ENCODE measurements at regions of chr9 and their contacts with region 1.

Region 1: GRCh38 chr9:112997236-112997941 is 14.6 kb downstream of the ZNF883 start:
- DNase-seq: no peak
- ATAC-seq: no peak
- H3K4me3 ChIP-seq: no peak overlapping the region
- H3K27ac ChIP-seq: no peak overlapping the region
- H3K4me1 ChIP-seq: no peaks in the 10 kb centered on the region
- H3K27me3 ChIP-seq: no peaks in the 10 kb centered on the region
- CTCF ChIP-seq: no peak

Region 2: GRCh38 chr9:112831281-112831851 is 166.0 kb before region 1 on chr9:
- intact Hi-C with region 1: no loop called
- DNase-seq: peak; percentile 36 to 38
- ATAC-seq: peak; percentile 74 to 90 (median 83)
- H3K4me3 ChIP-seq: no peak overlapping the region
- H3K27ac ChIP-seq: peak overlapping the region in 8 of 10 donors; percentile 6 to 54 (median 24)
- H3K4me1 ChIP-seq: peaks cover 0 to 18% (median 9%) of the 10 kb centered on the region in 9 donors
- H3K27me3 ChIP-seq: no peaks in the 10 kb centered on the region
- CTCF ChIP-seq: no peak

Region 3: DNA sequence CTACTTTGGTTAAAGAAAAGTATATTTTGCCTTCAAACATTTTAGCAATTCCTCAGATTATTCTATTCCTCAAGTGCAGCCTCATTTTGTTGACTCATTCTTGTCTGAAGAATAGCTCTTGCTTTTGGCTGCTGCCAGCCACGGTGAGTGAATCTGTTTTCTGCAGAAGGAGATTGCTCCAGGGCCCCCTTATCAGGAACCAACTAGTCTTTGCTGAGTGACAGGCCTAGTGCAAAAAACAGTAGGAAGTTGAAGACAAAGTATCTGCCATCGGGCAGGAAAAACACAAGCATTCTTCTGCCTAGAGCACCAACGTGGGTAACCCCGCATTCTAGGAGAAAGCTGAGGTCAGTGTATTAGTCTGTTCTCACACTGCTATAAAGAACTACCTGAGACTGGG is 27.7 kb before region 1 on chr9:
- intact Hi-C with region 1: loop called in 1 of 10 experiments (anchors 5 kb)
- DNase-seq: no peak
- ATAC-seq: no peak
- H3K4me3 ChIP-seq: no peak overlapping the region
- H3K27ac ChIP-seq: no peak overlapping the region
- H3K4me1 ChIP-seq: no peaks in the 10 kb centered on the region
- H3K27me3 ChIP-seq: peaks cover 0 to 8% (median 0%) of the 10 kb centered on the region in 7 donors
- CTCF ChIP-seq: no peak

Region 4: DNA sequence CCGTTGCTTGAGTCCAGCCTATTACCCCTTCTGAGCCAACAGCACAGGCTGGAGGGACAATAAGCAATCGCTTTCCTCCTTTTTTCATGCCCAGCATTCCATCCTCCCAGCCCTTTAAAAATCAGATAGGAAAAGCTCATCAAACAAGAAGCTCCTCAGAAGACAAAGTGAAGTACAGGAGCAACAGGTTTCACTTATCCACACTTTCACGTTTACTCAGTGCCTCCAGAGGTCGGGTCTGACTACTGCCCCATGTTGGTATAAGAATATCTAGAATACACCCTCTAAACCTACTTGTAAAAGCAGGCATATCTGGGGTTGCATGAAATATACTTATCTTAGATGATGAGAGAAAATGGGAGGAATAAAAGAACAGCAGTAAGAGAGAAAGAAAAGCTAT is 199.6 kb after region 1 on chr9:
- intact Hi-C with region 1: no loop called
- DNase-seq: no peak
- ATAC-seq: no peak
- H3K4me3 ChIP-seq: no peak overlapping the region
- H3K27ac ChIP-seq: no peak overlapping the region
- H3K4me1 ChIP-seq: no peaks in the 10 kb centered on the region
- H3K27me3 ChIP-seq: no peaks in the 10 kb centered on the region
- CTCF ChIP-seq: no peak